ENCODE measurements at regions of chr17 and their contacts with region 1.

Region 1: GRCh38 chr17:8057691-8058114 is 18.8 kb downstream of the ALOX15B start:
- DNase-seq: peak in 11 of 14 experiments; percentile 19 to 83 (median 35)
- ATAC-seq: peak; percentile 96
- H3K4me3 ChIP-seq: no peak overlapping the region
- H3K4me3 Mint-ChIP-seq: no peak overlapping the region
- H3K27ac ChIP-seq: no peak overlapping the region
- H3K27ac Mint-ChIP-seq: no peak overlapping the region
- H3K4me1 ChIP-seq: peaks cover 15% of the 10 kb centered on the region
- H3K4me1 Mint-ChIP-seq: no peaks in the 10 kb centered on the region
- H3K27me3 ChIP-seq: peaks cover 5 to 38% of the 10 kb centered on the region in 2 experiments
- H3K27me3 Mint-ChIP-seq: peaks cover 58% of the 10 kb centered on the region
- CTCF ChIP-seq: peak; percentile 71

Region 2: DNA sequence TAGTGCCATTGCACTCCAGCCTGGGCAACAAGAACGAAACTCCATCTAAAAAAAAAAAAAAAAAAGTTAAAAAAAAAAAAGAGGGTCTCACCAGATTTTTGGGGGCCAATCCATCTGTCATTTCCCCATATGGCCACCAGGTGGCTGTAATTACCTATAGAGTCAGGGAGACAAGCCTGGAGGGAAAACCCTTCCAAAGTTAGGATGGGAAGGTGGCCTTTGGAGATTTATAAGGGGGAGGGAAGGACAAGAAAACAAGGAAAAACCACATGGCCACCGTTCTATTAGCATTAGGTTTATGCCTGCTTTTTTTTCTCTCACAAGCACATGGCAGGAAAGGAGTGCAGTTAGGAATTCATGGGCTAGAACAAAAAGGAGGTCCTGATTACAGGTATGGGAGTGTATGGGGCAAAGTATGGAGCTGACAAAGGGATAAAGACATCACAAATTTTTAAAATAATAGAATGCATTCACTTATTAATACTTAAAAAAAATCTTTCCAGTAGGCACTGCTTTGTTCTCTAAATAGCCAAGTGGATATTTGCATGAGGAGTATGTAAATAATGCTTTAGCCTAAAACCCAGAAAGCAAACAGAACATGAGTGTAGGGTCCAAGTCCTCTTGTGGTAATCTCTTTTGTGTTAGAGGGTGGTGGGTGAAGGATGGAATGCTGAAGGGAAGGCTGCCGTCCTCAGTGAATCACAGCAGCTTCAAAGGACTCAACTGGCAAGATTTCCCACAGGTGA is 194.8 kb before region 1 on chr17:
- CTCF ChIA-PET with region 1: interaction called, 3 read pairs
- POLR2A ChIA-PET with region 1: no interaction called
- intact Hi-C with region 1: loop called in 1 of 2 experiments (anchors 2 kb)
- DNase-seq: peak in 9 of 14 experiments; percentile 31 to 70 (median 44)
- ATAC-seq: no peak
- H3K4me3 ChIP-seq: no peak overlapping the region
- H3K4me3 Mint-ChIP-seq: no peak overlapping the region
- H3K27ac ChIP-seq: no peak overlapping the region
- H3K27ac Mint-ChIP-seq: no peak overlapping the region
- H3K4me1 ChIP-seq: peaks cover 17% of the 10 kb centered on the region
- H3K4me1 Mint-ChIP-seq: peaks cover 18% of the 10 kb centered on the region
- H3K27me3 ChIP-seq: no peaks in the 10 kb centered on the region
- H3K27me3 Mint-ChIP-seq: no peaks in the 10 kb centered on the region
- CTCF ChIP-seq: peak; percentile 97

Region 3: GRCh38 chr17:8016632-8017478 is 40.8 kb before region 1 on chr17:
- CTCF ChIA-PET with region 1: interaction called, 3 read pairs
- POLR2A ChIA-PET with region 1: no interaction called
- intact Hi-C with region 1: loop called in 1 of 2 experiments (anchors 1 kb)
- DNase-seq: peak in 13 of 14 experiments; percentile 16 to 67 (median 35)
- ATAC-seq: peak; percentile 93
- H3K4me3 ChIP-seq: peak overlapping the region; percentile 54
- H3K4me3 Mint-ChIP-seq: peak overlapping the region; percentile 87
- H3K27ac ChIP-seq: no peak overlapping the region
- H3K27ac Mint-ChIP-seq: no peak overlapping the region
- H3K4me1 ChIP-seq: peaks cover 16% of the 10 kb centered on the region
- H3K4me1 Mint-ChIP-seq: peaks cover 6% of the 10 kb centered on the region
- H3K27me3 ChIP-seq: peaks cover 4 to 16% of the 10 kb centered on the region in 2 experiments
- H3K27me3 Mint-ChIP-seq: peaks cover 42% of the 10 kb centered on the region
- CTCF ChIP-seq: peak; percentile 59

Region 4: GRCh38 chr17:8047478-8048010 is 10.2 kb before region 1 on chr17:
- CTCF ChIA-PET with region 1: no interaction called
- POLR2A ChIA-PET with region 1: no interaction called
- intact Hi-C with region 1: no loop called
- DNase-seq: no peak
- ATAC-seq: no peak
- H3K4me3 ChIP-seq: no peak overlapping the region
- H3K4me3 Mint-ChIP-seq: no peak overlapping the region
- H3K27ac ChIP-seq: no peak overlapping the region
- H3K27ac Mint-ChIP-seq: no peak overlapping the region
- H3K4me1 ChIP-seq: no peaks in the 10 kb centered on the region
- H3K4me1 Mint-ChIP-seq: no peaks in the 10 kb centered on the region
- H3K27me3 ChIP-seq: no peaks in the 10 kb centered on the region
- H3K27me3 Mint-ChIP-seq: no peaks in the 10 kb centered on the region
- CTCF ChIP-seq: no peak

Region 5: DNA sequence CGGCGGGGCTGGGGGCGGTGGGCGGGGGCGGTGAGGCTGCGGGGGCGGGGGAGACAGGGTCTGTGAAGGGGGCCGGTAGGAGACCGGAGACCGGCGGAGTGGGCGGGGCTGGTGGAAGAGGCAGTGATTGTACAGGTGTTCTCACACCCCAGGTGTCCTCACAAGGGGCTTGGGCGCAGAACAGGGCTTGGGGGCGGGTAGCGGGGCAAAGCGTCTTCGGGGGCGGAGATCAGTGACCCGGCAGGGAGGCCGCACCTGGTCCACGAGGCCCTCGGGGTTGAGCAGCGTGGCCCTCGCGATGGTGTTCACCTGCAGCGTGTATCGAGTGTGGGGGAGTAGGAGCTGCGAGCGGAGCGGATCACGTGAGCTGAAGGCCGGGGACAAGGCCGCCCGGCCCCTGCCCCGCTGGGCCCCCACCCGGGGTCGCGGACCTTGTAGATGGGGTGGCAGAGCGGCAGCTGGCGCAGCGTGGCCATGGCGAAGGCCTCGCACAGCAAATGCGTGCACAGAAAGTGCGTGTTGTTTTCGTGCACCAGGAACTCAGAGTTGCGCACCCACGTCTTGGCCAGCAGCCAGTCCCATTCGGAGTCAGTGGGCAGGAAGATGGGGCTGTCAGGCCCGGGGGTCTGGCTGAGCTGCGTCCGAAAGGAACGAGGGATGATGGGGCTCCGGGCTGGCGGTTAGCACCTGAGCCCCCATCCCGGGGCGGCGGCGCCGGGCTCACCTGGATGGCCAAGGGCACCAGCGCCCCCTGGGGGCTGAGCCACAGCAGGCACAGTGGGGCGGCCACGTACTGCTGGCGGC is 52.2 kb after region 1 on chr17:
- CTCF ChIA-PET with region 1: interaction called, 10 read pairs
- POLR2A ChIA-PET with region 1: interaction called, 4 read pairs
- intact Hi-C with region 1: loop called (anchors 1 kb)
- DNase-seq: peak; percentile 76 to 91 (median 82)
- ATAC-seq: peak; percentile 99
- H3K4me3 ChIP-seq: peak overlapping the region; percentile 61
- H3K4me3 Mint-ChIP-seq: peak overlapping the region; percentile 45
- H3K27ac ChIP-seq: no peak overlapping the region
- H3K27ac Mint-ChIP-seq: peak overlapping the region; percentile 12
- H3K4me1 ChIP-seq: peaks cover 13% of the 10 kb centered on the region
- H3K4me1 Mint-ChIP-seq: peaks cover 4% of the 10 kb centered on the region
- H3K27me3 ChIP-seq: peaks cover 10 to 11% of the 10 kb centered on the region in 2 experiments
- H3K27me3 Mint-ChIP-seq: peaks cover 26% of the 10 kb centered on the region
- CTCF ChIP-seq: peak; percentile 97

Region 6: DNA sequence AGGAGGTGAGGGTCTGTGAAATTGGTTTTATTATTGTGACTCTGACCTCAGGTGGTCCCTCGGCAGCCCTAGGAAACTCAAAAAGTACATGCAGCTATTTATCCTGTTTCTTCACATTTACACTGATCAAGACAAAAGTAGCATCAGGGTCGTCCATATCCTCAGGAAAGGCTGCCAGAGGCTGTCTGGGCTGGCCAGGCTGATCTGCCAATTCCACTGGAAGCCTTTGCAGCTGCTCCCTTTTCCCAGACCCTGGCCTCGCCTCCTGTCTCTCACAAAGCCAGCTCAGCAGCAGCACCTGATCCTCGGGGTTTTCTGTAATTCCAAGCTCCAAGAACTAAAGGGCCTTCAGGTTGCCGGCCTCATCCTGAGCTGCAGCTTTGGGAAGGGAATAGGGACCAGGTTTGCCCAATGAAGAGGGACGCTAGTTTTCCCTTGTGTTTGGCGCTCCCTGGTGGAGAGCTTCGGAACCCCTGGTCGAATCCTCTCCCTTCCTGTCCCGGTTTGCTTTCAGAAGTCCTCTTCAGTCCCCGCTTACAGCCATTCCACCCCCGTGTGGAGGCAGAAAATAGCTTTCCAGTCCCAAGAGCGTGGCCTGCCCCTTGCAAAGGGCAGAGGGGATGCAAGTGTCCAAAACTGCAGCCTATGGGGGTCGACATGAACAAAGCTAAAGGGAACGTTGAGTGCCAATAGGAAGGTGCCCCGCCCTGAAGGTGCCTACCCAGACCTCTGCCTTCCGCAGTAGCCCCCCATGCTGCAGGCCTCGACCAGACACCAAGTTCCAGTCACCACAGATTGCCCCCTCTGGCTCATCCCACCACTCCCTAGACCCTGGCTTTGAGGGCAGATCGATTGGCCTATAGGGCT is 728.1 kb after region 1 on chr17:
- CTCF ChIA-PET with region 1: interaction called, 7 read pairs
- POLR2A ChIA-PET with region 1: no interaction called
- intact Hi-C with region 1: loop called (anchors 5 to 10 kb)
- DNase-seq: peak; percentile 35 to 73 (median 55)
- ATAC-seq: peak; percentile 44
- H3K4me3 ChIP-seq: no peak overlapping the region
- H3K4me3 Mint-ChIP-seq: no peak overlapping the region
- H3K27ac ChIP-seq: no peak overlapping the region
- H3K27ac Mint-ChIP-seq: no peak overlapping the region
- H3K4me1 ChIP-seq: peaks cover 6% of the 10 kb centered on the region
- H3K4me1 Mint-ChIP-seq: no peaks in the 10 kb centered on the region
- H3K27me3 ChIP-seq: no peaks in the 10 kb centered on the region
- H3K27me3 Mint-ChIP-seq: no peaks in the 10 kb centered on the region
- CTCF ChIP-seq: peak; percentile 73